GM13976 (cell line): ENCODE measurements at regions of chr4 and their contacts with region 1.

Region 1: GRCh38 chr4:39977489-39978377 is at the start of gene PDS5A:
- DNase-seq: peak; percentile 97
- CTCF ChIP-seq: peak; percentile 99

Region 2: GRCh38 chr4:39469429-39470077 is 508.2 kb before region 1 on chr4:
- in situ Hi-C with region 1: loop called (anchors 10 kb)
- DNase-seq: peak; percentile 62
- CTCF ChIP-seq: peak; percentile 44

Region 3: DNA sequence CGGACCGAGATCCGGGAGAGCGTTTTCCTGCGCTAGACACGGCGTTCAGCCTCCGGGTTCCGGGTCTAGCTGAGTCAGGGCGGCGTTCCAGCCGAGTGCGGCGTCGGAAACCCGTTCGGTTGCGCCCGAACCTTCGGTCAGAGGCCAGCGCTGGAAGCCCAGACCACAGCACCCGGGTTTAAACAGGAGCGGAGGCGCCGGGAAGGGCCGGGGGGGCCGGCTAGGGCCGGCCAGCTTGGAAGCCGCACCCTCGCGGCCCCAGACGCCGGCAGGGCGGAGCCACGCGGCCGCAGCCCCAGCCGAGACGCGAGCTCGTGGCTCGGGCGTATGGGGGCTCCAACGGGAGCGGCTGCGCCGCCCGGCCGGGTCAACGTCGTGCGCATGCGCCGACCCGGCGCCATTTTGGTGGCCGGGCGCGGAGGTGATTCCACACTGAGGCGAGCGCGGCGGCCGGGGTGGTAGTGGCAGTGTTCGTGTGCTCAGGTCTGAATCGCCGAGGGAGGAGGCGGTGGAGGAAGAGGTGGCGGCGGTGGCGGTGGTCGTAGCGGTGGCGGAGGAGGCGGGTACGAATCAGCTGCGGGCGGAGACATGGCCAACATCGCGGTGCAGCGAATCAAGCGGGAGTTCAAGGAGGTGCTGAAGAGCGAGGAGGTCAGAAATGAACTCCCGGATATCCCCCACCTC is 279.9 kb before region 1 on chr4 and contains the start of gene UBE2K:
- in situ Hi-C with region 1: loop called (anchors 10 kb)
- DNase-seq: peak; percentile 95
- CTCF ChIP-seq: no peak

Region 4: DNA sequence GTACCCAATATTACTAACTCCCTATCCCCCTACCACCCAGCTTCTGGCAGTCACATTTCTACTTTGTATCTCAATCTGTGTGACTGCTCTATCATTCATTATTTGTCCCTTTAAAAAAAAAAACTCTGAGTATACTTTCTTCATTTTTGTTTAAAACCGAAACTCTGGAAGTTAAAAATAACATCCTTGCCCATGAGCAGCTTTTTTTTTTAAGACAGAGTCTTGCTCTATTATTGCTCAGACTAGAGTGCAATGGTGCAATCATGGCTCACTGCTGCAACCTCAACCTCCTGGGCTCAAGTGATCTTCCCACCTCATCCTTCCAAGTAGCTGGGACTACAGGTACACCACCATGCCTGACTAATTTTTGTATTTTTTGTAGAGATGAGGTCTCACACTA is 264.0 kb before region 1 on chr4:
- in situ Hi-C with region 1: no loop called
- DNase-seq: no peak
- CTCF ChIP-seq: no peak

Region 5: DNA sequence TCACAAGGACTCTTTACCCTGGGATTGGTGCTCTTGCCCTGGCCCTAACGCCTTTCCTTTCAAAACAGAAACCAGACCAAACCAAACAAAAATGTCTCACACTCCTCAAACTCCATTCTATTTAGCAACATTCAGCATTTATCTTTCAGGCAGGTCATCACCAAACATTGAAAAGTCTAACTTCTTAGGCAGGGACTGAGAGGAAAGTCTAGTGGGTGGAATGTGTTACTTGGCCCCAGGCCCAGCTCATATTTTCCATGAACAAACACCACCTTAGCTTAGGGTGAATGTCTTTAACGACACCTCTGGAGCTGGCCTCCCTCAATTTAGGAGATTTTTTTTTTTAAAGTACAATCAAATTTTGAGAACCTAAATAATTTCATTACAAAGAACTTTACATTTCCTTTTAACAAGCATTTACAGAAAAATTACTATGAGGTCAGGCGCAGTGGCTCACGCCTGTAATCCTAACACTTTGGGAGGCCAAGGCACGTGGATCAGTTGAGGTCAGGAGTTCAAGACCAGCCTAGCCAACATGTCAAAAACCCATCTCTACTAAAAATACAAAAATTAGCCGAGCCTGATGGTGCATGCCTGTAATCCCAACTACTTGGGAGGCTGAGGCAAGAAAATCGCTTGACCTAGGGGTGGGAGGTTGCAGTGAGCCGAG is 68.7 kb after region 1 on chr4:
- in situ Hi-C with region 1: no loop called
- DNase-seq: no peak
- CTCF ChIP-seq: no peak